ENCODE measurements at regions of chr15 and their contacts with region 1.

Region 1: GRCh38 chr15:78241007-78241406 is 6.6 kb upstream of the ACSBG1 start:
- DNase-seq: peak; percentile 79
- H3K4me3 Mint-ChIP-seq: no peak overlapping the region
- H3K27ac Mint-ChIP-seq: no peak overlapping the region
- H3K4me1 Mint-ChIP-seq: peaks cover 5% of the 10 kb centered on the region
- H3K27me3 Mint-ChIP-seq: no peaks in the 10 kb centered on the region
- CTCF ChIP-seq: peak; percentile 92

Region 2: DNA sequence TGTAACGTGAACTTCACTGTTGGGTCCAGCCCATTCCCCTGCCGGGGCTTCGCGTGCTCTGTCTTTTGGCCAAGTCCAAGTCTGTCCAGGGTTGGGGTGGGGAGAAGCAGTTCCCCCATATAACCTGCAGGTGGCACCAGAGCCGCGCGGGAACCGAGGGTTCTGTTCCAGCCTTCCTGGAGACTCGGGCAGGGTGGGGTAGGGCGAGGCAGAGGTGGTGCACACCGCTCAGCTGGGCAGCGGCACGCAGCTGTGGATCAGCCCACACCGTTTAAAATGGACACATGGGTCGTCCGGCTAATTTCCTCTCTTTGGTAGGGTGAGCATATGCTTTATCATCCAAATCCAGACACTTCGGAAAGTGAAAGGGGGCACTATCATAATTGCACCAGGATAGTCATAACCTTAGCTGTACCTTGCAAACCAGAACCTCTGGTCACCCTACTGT is 281.6 kb before region 1 on chr15:
- CTCF ChIA-PET with region 1: interaction called, 26 read pairs
- POLR2A ChIA-PET with region 1: no interaction called
- intact Hi-C with region 1: no loop called
- DNase-seq: peak; percentile 77
- H3K4me3 Mint-ChIP-seq: peak overlapping the region; percentile 35
- H3K27ac Mint-ChIP-seq: no peak overlapping the region
- H3K4me1 Mint-ChIP-seq: peaks cover 6% of the 10 kb centered on the region
- H3K27me3 Mint-ChIP-seq: peaks cover 20% of the 10 kb centered on the region
- CTCF ChIP-seq: peak; percentile 94

Region 3: DNA sequence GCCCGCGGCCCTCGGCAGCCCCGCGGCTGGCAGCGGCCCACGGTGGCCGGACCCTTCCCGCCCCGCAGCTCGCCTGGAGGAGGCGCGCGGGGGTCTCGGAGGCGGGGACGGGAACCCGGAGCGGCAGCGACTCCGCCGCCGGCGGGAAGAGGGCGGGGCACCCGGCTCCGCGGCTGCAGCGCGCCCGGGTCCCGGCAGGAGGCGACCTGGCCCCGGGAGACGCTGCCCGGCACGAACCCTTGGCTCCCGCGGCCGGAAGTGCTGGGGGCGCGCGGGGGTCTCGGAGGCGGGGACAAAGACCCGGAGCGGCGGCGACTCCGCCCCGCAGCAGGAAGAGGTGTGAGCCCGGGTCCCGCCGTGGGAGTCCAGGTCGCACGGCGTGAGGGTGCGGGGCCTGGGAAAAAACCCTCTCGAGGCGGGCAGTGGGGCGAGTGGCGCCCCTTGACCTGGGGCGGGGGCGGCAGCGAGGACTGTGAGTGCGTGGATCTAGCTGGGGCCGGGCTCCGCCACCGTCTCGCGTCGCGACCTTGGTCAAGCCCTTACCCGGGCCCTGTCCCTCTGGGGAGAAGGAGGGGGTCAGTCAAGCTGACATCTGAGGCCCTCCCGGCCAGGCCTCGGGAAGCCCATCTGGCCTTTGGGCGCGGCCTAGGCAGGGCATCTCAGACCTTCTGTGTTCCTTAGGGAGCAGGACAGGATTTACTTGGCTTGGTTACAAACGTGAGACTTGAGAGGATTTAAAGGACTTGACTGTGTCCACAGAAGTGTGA is 109.5 kb before region 1 on chr15 and contains the start of gene CIB2:
- CTCF ChIA-PET with region 1: interaction called, 21 read pairs
- POLR2A ChIA-PET with region 1: no interaction called
- intact Hi-C with region 1: loop called (anchors 5 kb)
- DNase-seq: peak; percentile 41
- H3K4me3 Mint-ChIP-seq: peak within 1 kb of the TSS; percentile 72
- H3K27ac Mint-ChIP-seq: peak within 1 kb of the TSS; percentile 59
- H3K4me1 Mint-ChIP-seq: peaks cover 5% of the 10 kb centered on the region
- H3K27me3 Mint-ChIP-seq: no peaks in the 10 kb centered on the region
- CTCF ChIP-seq: peak; percentile 80
- total RNA-seq, gene CIB2: 0.30 and 0.34 TPM in 2 replicates

Region 4: GRCh38 chr15:78170848-78171773 is 69.9 kb before region 1 on chr15:
- CTCF ChIA-PET with region 1: interaction called, 110 read pairs
- POLR2A ChIA-PET with region 1: no interaction called
- intact Hi-C with region 1: no loop called
- DNase-seq: no peak
- H3K4me3 Mint-ChIP-seq: no peak overlapping the region
- H3K27ac Mint-ChIP-seq: no peak overlapping the region
- H3K4me1 Mint-ChIP-seq: no peaks in the 10 kb centered on the region
- H3K27me3 Mint-ChIP-seq: no peaks in the 10 kb centered on the region
- CTCF ChIP-seq: no peak

Region 5: DNA sequence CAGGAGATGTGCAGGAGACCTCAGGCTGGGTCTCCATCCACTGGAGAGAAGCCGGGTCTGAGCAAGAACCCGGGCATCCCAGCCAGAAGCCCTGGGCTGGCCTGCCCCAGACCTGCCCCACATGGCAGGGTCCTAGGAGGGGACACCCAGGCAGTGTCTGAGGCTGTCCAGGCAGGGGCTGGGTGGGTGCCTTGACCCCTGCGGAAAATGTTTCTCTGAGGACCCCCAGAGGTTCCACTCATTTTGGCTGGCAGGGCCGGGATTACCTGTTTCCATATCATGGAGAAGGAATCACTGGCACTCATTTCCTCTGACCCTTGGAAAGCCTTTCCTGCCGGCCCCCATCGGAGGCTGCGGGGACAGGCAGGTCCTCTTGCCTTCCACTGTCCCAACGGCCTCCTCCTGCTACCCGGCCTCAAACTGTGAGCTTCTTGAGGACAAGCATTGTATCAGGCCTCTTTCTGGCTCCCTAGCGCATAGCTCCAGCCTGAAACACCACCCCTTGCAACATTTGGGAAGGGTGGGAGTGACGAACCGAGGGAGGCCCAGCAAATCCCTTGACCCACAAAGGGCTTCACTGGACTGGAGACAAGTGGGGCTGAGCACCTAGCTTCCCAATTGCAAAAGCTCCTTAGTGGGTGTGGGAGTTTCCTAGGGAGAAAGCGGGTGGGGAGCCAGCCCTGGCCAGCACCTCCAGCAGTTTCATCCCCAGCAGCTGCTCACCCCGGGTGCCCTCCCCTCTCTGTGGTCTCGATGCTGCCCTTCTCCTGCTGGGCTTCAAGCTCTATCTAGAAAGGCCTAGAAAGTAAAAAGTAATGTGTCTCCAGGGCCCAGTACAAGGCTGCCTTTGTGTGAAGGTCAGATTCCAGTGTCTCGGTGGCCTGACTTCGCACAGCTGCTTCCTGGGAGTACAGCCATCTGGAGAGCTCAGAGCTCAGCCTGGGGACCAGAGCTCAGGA is 36.4 kb before region 1 on chr15:
- CTCF ChIA-PET with region 1: interaction called, 10 read pairs
- POLR2A ChIA-PET with region 1: no interaction called
- intact Hi-C with region 1: no loop called
- DNase-seq: no peak
- H3K4me3 Mint-ChIP-seq: no peak overlapping the region
- H3K27ac Mint-ChIP-seq: no peak overlapping the region
- H3K4me1 Mint-ChIP-seq: no peaks in the 10 kb centered on the region
- H3K27me3 Mint-ChIP-seq: peaks cover 39% of the 10 kb centered on the region
- CTCF ChIP-seq: no peak

Region 6: GRCh38 chr15:78255421-78256043 is 14.5 kb after region 1 on chr15:
- CTCF ChIA-PET with region 1: interaction called, 10 read pairs
- POLR2A ChIA-PET with region 1: no interaction called
- intact Hi-C with region 1: no loop called
- DNase-seq: no peak
- H3K4me3 Mint-ChIP-seq: no peak overlapping the region
- H3K27ac Mint-ChIP-seq: no peak overlapping the region
- H3K4me1 Mint-ChIP-seq: no peaks in the 10 kb centered on the region
- H3K27me3 Mint-ChIP-seq: peaks cover 8% of the 10 kb centered on the region
- CTCF ChIP-seq: no peak

Measured in MCF 10A (cell line).